Heart right ventricle (tissue), 16 donors: ENCODE measurements at regions of chr13 and their contacts with region 1.

Region 1: GRCh38 chr13:92265408-92265807 is 867.0 kb downstream of the GPC5 start:
- DNase-seq: no peak
- ATAC-seq: peak in 7 of 8 donors; percentile 42 to 75 (median 64)
- H3K4me3 ChIP-seq: no peak overlapping the region
- H3K27ac ChIP-seq: peak overlapping the region in 4 of 10 donors; percentile 4 to 38 (median 18)
- H3K4me1 ChIP-seq: peaks cover 0 to 5% (median 0%) of the 10 kb centered on the region in 9 donors
- H3K27me3 ChIP-seq: no peaks in the 10 kb centered on the region
- CTCF ChIP-seq: no peak

Region 2: GRCh38 chr13:92224052-92224821 is 41.2 kb before region 1 on chr13:
- intact Hi-C with region 1: loop called in 1 of 10 experiments (anchors 5 kb)
- DNase-seq: no peak
- ATAC-seq: peak; percentile 75 to 94 (median 90)
- H3K4me3 ChIP-seq: no peak overlapping the region
- H3K27ac ChIP-seq: peak overlapping the region in 4 of 10 donors; percentile 7 to 67 (median 34)
- H3K4me1 ChIP-seq: peaks cover 0 to 3% (median 0%) of the 10 kb centered on the region in 9 donors
- H3K27me3 ChIP-seq: no peaks in the 10 kb centered on the region
- CTCF ChIP-seq: no peak

Region 3: GRCh38 chr13:92677571-92677970 is 412.2 kb after region 1 on chr13:
- intact Hi-C with region 1: no loop called
- DNase-seq: peak in 1 of 2 donors; percentile 19
- ATAC-seq: peak in 3 of 8 donors; percentile 48 to 93 (median 69)
- H3K4me3 ChIP-seq: peak overlapping the region in 2 of 10 donors; percentile 6 to 28
- H3K27ac ChIP-seq: no peak overlapping the region
- H3K4me1 ChIP-seq: no peaks in the 10 kb centered on the region
- H3K27me3 ChIP-seq: no peaks in the 10 kb centered on the region
- CTCF ChIP-seq: no peak